Endothelial cell of umbilical vein (primary cell): ENCODE measurements at regions of chr1 and their contacts with region 1.

Region 1: GRCh38 chr1:3796215-3797061 is at the start of gene LRRC47:
- DNase-seq: peak; percentile 89
- H3K4me3 ChIP-seq: peak within 1 kb of the TSS; percentile 46 to 73 (median 73)
- H3K27ac ChIP-seq: peak within 1 kb of the TSS; percentile 43
- H3K4me1 ChIP-seq: peaks cover 8% of the 10 kb centered on the region
- H3K27me3 ChIP-seq: peaks cover 0 to 1% of the 10 kb centered on the region in 2 experiments
- CTCF ChIP-seq: no peak
- POLR2A ChIP-seq: peak; percentile 64
- total RNA-seq, gene LRRC47: 41.2 and 42.5 TPM in 2 replicates

Region 2: DNA sequence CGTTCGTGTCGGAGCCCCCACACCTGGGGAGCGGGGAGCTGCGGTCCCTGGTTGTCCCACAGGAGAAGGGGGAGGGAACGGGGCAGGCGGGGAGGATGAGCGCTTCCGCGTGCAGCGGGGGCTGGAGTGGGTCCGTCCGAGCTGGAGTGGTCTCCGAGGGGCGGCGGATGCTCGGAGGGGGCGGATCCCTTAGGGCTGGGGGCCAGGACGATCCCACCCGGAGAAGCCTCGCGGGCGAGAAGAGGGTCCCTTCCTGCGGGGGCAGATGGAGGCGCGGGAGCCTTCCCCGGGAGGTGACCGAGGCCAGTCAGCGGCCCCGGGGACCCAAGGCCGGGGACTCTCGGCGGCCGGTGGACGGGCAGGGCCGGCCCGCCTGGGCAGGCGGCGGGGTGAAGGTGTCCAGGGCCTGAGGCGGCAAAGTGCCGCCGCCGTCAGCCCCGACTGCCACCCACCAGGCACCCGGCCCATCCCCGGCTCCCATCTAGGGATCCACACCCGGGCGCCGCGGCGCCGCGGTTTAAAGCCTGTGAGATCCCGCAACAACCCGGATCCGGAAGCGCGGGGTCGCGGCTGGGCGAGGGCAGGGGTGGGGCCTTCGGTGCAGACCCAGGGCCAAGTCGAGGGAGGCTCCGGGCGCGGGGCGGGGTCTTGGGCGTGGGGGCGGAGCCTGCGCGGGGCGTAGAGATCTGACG is 49.5 kb before region 1 on chr1:
- CTCF ChIA-PET with region 1: no interaction called
- POLR2A ChIA-PET with region 1: no interaction called
- dilution Hi-C with region 1: no loop called
- intact Hi-C with region 1: loop called (anchors 1 kb)
- DNase-seq: peak; percentile 77
- H3K4me3 ChIP-seq: peak overlapping the region; percentile 67 to 79 (median 74)
- H3K27ac ChIP-seq: peak overlapping the region; percentile 24
- H3K4me1 ChIP-seq: peaks cover 11% of the 10 kb centered on the region
- H3K27me3 ChIP-seq: peaks cover 0 to 7% of the 10 kb centered on the region in 2 experiments
- CTCF ChIP-seq: no peak
- POLR2A ChIP-seq: peak; percentile 85

Region 3: GRCh38 chr1:3772027-3772714 is 24.3 kb before region 1 on chr1:
- CTCF ChIA-PET with region 1: interaction called, 7 read pairs
- POLR2A ChIA-PET with region 1: interaction called, 3 read pairs
- dilution Hi-C with region 1: no loop called
- intact Hi-C with region 1: loop called (anchors 1 kb)
- DNase-seq: peak; percentile 72
- H3K4me3 ChIP-seq: peak overlapping the region; percentile 35 to 51 (median 49)
- H3K27ac ChIP-seq: no peak overlapping the region
- H3K4me1 ChIP-seq: peaks cover 6% of the 10 kb centered on the region
- H3K27me3 ChIP-seq: no peaks in the 10 kb centered on the region
- CTCF ChIP-seq: no peak
- POLR2A ChIP-seq: no peak

Region 4: GRCh38 chr1:3856908-3857790 is 60.7 kb after region 1 on chr1 and contains the starts of genes CEP104 and DFFB:
- CTCF ChIA-PET with region 1: interaction called, 3 read pairs
- POLR2A ChIA-PET with region 1: no interaction called
- dilution Hi-C with region 1: no loop called
- intact Hi-C with region 1: loop called (anchors 1 kb)
- DNase-seq: peak; percentile 90
- H3K4me3 ChIP-seq: peak within 1 kb of the TSS; percentile 16 to 76 (median 72)
- H3K27ac ChIP-seq: peak within 1 kb of the TSS; percentile 59
- H3K4me1 ChIP-seq: peaks cover 9% of the 10 kb centered on the region
- H3K27me3 ChIP-seq: no peaks in the 10 kb centered on the region
- CTCF ChIP-seq: no peak
- POLR2A ChIP-seq: peak; percentile 61
- total RNA-seq, gene CEP104: 41.8 and 43.0 TPM in 2 replicates
- total RNA-seq, gene DFFB: 10.6 and 11.7 TPM in 2 replicates